Aorta (tissue), 5 donors: ENCODE measurements at regions of chr1 and their contacts with region 1.

Region 1: GRCh38 chr1:180623579-180624347 is 8.1 kb upstream of the XPR1 start:
- DNase-seq: no peak
- ATAC-seq: no peak
- H3K4me3 ChIP-seq: no peak overlapping the region
- H3K27ac ChIP-seq: no peak overlapping the region
- H3K4me1 ChIP-seq: no peaks in the 10 kb centered on the region
- H3K27me3 ChIP-seq: no peaks in the 10 kb centered on the region

Region 2: GRCh38 chr1:180515864-180516388 is 107.8 kb before region 1 on chr1:
- intact Hi-C with region 1: loop called in 1 of 2 experiments (anchors 5 kb)
- DNase-seq: peak in 1 of 2 donors; percentile 61
- ATAC-seq: peak; percentile 96
- H3K4me3 ChIP-seq: no peak overlapping the region
- H3K27ac ChIP-seq: no peak overlapping the region
- H3K4me1 ChIP-seq: no peaks in the 10 kb centered on the region
- H3K27me3 ChIP-seq: no peaks in the 10 kb centered on the region

Region 3: GRCh38 chr1:180579961-180580611 is 43.7 kb before region 1 on chr1:
- intact Hi-C with region 1: loop called in 1 of 2 experiments (anchors 10 kb)
- DNase-seq: no peak
- ATAC-seq: no peak
- H3K4me3 ChIP-seq: no peak overlapping the region
- H3K27ac ChIP-seq: no peak overlapping the region
- H3K4me1 ChIP-seq: no peaks in the 10 kb centered on the region
- H3K27me3 ChIP-seq: no peaks in the 10 kb centered on the region